Naive thymus-derived CD4-positive, alpha-beta T cell (primary cell): ENCODE measurements at regions of chr16 and their contacts with region 1.

Region 1: GRCh38 chr16:13919683-13920509 is at the start of gene ERCC4:
- DNase-seq: peak; percentile 95 to 100 (median 99)
- ATAC-seq: peak; percentile 96
- H3K4me3 ChIP-seq: peak within 1 kb of the TSS; percentile 98
- H3K4me3 Mint-ChIP-seq: peak within 1 kb of the TSS; percentile 61 to 97 (median 92)
- H3K27ac ChIP-seq: peak within 1 kb of the TSS; percentile 85
- H3K27ac Mint-ChIP-seq: peak within 1 kb of the TSS; percentile 16 to 96 (median 93)
- H3K4me1 ChIP-seq: peaks cover 11 to 16% of the 10 kb centered on the region in 2 donors
- H3K4me1 Mint-ChIP-seq: peaks cover 18 to 30% (median 25%) of the 10 kb centered on the region in 7 donors
- H3K27me3 ChIP-seq: no peaks in the 10 kb centered on the region
- H3K27me3 Mint-ChIP-seq: peaks cover 0 to 7% (median 0%) of the 10 kb centered on the region in 5 donors
- total RNA-seq, gene ERCC4: 6.1 to 15.2 (median 13.4) TPM

Region 2: GRCh38 chr16:12095275-12096156 is 1824.4 kb before region 1 on chr16:
- CTCF ChIA-PET with region 1: no interaction called
- POLR2A ChIA-PET with region 1: no interaction called
- intact Hi-C with region 1: loop called in 1 of 2 experiments (anchors 5 kb)
- DNase-seq: peak; percentile 27 to 70 (median 57)
- ATAC-seq: peak; percentile 76
- H3K4me3 ChIP-seq: peak overlapping the region; percentile 31
- H3K4me3 Mint-ChIP-seq: peak overlapping the region; percentile 70 to 86 (median 82)
- H3K27ac ChIP-seq: no peak overlapping the region
- H3K27ac Mint-ChIP-seq: peak overlapping the region in 7 of 9 donors; percentile 25 to 81 (median 63)
- H3K4me1 ChIP-seq: peaks cover 0 to 2% of the 10 kb centered on the region in 2 donors
- H3K4me1 Mint-ChIP-seq: peaks cover 7 to 52% (median 38%) of the 10 kb centered on the region in 7 donors
- H3K27me3 ChIP-seq: no peaks in the 10 kb centered on the region
- H3K27me3 Mint-ChIP-seq: no peaks in the 10 kb centered on the region

Region 3: GRCh38 chr16:13968835-13969234 is 48.9 kb after region 1 on chr16:
- CTCF ChIA-PET with region 1: no interaction called
- POLR2A ChIA-PET with region 1: no interaction called
- intact Hi-C with region 1: no loop called
- DNase-seq: no peak
- ATAC-seq: no peak
- H3K4me3 ChIP-seq: no peak overlapping the region
- H3K4me3 Mint-ChIP-seq: no peak overlapping the region
- H3K27ac ChIP-seq: no peak overlapping the region
- H3K27ac Mint-ChIP-seq: no peak overlapping the region
- H3K4me1 ChIP-seq: no peaks in the 10 kb centered on the region
- H3K4me1 Mint-ChIP-seq: peaks cover 0 to 8% (median 0%) of the 10 kb centered on the region in 7 donors
- H3K27me3 ChIP-seq: no peaks in the 10 kb centered on the region
- H3K27me3 Mint-ChIP-seq: peaks cover 19 to 38% (median 29%) of the 10 kb centered on the region in 5 donors

Region 4: DNA sequence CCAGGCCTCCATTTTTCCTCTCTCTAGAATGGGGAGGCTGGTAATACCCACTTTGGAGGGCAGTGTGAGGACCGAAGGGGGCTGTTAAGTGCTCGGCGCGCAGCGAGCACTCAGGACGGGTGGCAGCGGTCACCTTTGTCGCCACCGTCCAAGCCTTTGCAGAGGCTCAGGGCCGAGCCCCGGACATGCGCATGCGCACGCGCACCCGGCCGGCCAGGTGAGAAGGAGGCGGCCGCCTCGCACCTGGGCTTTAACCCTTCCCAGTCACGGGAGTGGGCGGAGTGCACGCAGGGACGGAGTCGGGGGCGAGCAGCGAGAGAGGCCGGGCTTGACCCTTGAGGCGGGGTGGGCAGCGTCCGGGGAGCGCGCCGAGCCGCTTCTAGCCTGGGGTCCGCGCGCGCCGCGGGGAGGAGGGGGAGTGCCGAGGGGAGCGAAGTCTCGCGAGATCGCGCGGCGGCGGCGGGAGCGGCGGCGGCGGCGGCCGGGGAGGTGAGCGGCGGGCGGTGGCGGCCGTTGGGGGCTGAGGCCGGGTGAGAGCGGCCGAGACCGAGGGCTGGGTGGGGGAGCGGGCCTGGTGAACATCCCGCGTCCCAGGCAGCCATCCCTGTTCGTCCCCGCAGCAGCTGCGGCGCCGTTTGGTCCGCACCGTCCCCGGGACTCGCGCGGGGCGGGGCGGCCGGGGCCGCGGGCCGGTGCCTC is 151.1 kb after region 1 on chr16 and contains the start of gene MRTFB:
- CTCF ChIA-PET with region 1: no interaction called
- POLR2A ChIA-PET with region 1: interaction called, 3 read pairs
- intact Hi-C with region 1: loop called (anchors 1 to 5 kb)
- DNase-seq: peak; percentile 72 to 93 (median 85)
- ATAC-seq: peak; percentile 88
- H3K4me3 ChIP-seq: peak within 1 kb of the TSS; percentile 94
- H3K4me3 Mint-ChIP-seq: peak within 1 kb of the TSS; percentile 82 to 93 (median 90)
- H3K27ac ChIP-seq: peak within 1 kb of the TSS; percentile 79
- H3K27ac Mint-ChIP-seq: peak within 1 kb of the TSS; percentile 82 to 95 (median 87)
- H3K4me1 ChIP-seq: peaks cover 6 to 8% of the 10 kb centered on the region in 2 donors
- H3K4me1 Mint-ChIP-seq: peaks cover 8 to 35% (median 20%) of the 10 kb centered on the region in 7 donors
- H3K27me3 ChIP-seq: no peaks in the 10 kb centered on the region
- H3K27me3 Mint-ChIP-seq: peaks cover 0 to 6% (median 4%) of the 10 kb centered on the region in 5 donors
- total RNA-seq, gene MRTFB: 18.7 to 33.2 (median 27.6) TPM

Region 5: DNA sequence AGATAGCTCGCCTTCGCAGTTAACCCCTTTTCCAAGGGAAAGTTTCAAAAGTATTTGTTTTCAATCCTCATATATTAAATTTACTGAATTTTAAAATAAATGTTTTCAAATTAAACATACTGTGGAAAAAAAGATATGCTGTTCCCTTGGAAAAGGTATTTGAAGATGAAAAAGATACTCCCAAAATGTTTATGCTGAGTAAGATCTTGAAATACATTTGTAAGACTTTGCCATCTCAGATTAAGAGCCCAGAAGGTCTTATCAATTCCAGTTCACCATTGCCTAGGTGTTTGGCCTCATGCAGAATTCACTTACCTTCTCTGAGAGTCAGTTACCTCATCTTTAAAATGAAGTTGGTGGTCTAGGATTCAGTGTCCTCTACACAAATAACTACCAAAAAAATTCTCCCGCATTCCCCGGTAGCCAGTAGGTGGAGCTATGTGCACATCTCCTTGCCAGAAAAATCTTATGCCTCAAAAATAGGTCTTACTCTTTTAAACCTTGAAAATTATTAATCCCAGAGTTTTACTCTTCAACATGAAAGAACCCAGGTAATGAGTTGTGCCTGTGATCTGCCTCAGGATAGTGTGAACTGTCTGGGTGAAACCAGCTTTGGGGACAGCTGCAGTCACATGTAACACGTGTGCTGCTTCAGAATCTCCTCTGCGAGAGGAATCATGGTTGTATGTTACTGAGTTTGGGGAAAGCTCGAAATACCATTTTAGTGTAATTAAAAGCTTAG is 329.6 kb after region 1 on chr16:
- CTCF ChIA-PET with region 1: interaction called, 7 read pairs
- POLR2A ChIA-PET with region 1: no interaction called
- intact Hi-C with region 1: loop called in 1 of 2 experiments (anchors 1 kb)
- DNase-seq: peak in 8 of 9 donors; percentile 25 to 66 (median 49)
- ATAC-seq: peak; percentile 59
- H3K4me3 ChIP-seq: no peak overlapping the region
- H3K4me3 Mint-ChIP-seq: no peak overlapping the region
- H3K27ac ChIP-seq: no peak overlapping the region
- H3K27ac Mint-ChIP-seq: no peak overlapping the region
- H3K4me1 ChIP-seq: no peaks in the 10 kb centered on the region
- H3K4me1 Mint-ChIP-seq: no peaks in the 10 kb centered on the region
- H3K27me3 ChIP-seq: no peaks in the 10 kb centered on the region
- H3K27me3 Mint-ChIP-seq: no peaks in the 10 kb centered on the region

Region 6: GRCh38 chr16:14310519-14310991 is 390.7 kb after region 1 on chr16:
- CTCF ChIA-PET with region 1: no interaction called
- POLR2A ChIA-PET with region 1: no interaction called
- intact Hi-C with region 1: loop called (anchors 5 kb)
- DNase-seq: no peak
- ATAC-seq: no peak
- H3K4me3 ChIP-seq: no peak overlapping the region
- H3K4me3 Mint-ChIP-seq: peak overlapping the region in 2 of 10 donors; percentile 77 to 86
- H3K27ac ChIP-seq: no peak overlapping the region
- H3K27ac Mint-ChIP-seq: peak overlapping the region in 2 of 9 donors; percentile 25 to 26
- H3K4me1 ChIP-seq: peaks cover 0 to 43% of the 10 kb centered on the region in 2 donors
- H3K4me1 Mint-ChIP-seq: peaks cover 6 to 55% (median 45%) of the 10 kb centered on the region in 7 donors
- H3K27me3 ChIP-seq: no peaks in the 10 kb centered on the region
- H3K27me3 Mint-ChIP-seq: peaks cover 0 to 7% (median 0%) of the 10 kb centered on the region in 5 donors

Region 7: DNA sequence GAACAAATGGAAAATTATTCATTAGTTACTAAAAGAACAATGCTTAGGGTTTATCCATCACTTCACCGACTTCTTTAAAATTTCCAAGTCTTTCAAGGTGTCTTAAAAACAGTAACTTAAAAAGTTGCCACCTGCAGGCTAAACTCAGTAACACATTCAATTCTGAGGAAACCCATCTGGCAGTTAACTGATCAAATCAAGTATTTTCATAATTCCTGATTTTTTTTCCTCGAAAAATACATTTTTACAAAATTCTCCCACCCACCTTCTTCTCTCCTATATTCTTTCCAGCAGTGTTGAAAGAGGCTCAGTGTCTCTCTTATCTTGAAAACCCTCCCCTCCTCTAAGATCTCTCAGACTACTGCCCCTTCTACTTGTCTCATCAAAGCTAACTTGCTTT is 680.3 kb after region 1 on chr16:
- CTCF ChIA-PET with region 1: interaction called, 5 read pairs
- POLR2A ChIA-PET with region 1: no interaction called
- intact Hi-C with region 1: loop called in 1 of 2 experiments (anchors 1 kb)
- DNase-seq: peak in 4 of 9 donors; percentile 8 to 30 (median 18)
- ATAC-seq: no peak
- H3K4me3 ChIP-seq: no peak overlapping the region
- H3K4me3 Mint-ChIP-seq: no peak overlapping the region
- H3K27ac ChIP-seq: no peak overlapping the region
- H3K27ac Mint-ChIP-seq: no peak overlapping the region
- H3K4me1 ChIP-seq: no peaks in the 10 kb centered on the region
- H3K4me1 Mint-ChIP-seq: peaks cover 0 to 6% (median 3%) of the 10 kb centered on the region in 7 donors
- H3K27me3 ChIP-seq: no peaks in the 10 kb centered on the region
- H3K27me3 Mint-ChIP-seq: no peaks in the 10 kb centered on the region